Body of pancreas (tissue), 4 donors: ENCODE measurements at regions of chr10 and their contacts with region 1.

Region 1: DNA sequence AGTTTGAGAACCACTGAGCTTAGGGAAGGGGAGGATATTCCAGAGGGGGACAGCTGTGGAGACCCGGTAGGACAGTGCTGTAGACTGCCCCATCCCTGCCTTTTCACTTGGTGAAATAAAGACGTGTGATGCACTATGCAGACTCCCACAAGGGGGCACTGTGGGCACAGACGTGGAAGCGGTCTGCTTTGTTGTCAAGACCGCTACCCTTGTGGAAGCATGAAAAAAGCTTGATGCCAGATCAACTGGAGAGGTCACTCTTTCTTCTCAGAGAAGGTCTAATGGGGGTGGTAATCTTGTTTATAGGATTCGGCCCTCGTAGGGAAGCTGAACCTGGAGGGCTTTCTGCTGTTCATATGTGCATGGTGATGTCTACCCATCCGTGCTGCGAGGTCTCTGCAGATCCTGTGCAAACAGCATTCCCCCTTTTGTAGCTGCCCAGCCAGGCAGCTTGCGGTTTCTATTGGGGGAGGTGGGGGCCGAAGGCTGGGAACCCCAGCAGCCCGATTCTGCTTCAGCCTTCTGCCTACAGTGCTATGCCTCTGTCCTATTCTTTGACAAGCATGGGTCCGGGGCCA is 13.7 kb downstream of the RPS24 start:
- DNase-seq: peak; percentile 84 to 91 (median 88)
- ATAC-seq: peak; percentile 90
- H3K4me3 ChIP-seq: no peak overlapping the region
- H3K27ac ChIP-seq: no peak overlapping the region
- H3K4me1 ChIP-seq: no peaks in the 10 kb centered on the region
- H3K27me3 ChIP-seq: no peaks in the 10 kb centered on the region
- CTCF ChIP-seq: peak; percentile 74 to 93 (median 86)
- POLR2A ChIP-seq: no peak

Region 2: GRCh38 chr10:78657163-78657861 is 609.9 kb after region 1 on chr10:
- intact Hi-C with region 1: loop called (anchors 10 kb)
- DNase-seq: peak; percentile 82 to 88 (median 84)
- ATAC-seq: peak; percentile 89
- H3K4me3 ChIP-seq: no peak overlapping the region
- H3K27ac ChIP-seq: no peak overlapping the region
- H3K4me1 ChIP-seq: no peaks in the 10 kb centered on the region
- H3K27me3 ChIP-seq: no peaks in the 10 kb centered on the region
- CTCF ChIP-seq: peak; percentile 49 to 76 (median 68)
- POLR2A ChIP-seq: no peak

Region 3: DNA sequence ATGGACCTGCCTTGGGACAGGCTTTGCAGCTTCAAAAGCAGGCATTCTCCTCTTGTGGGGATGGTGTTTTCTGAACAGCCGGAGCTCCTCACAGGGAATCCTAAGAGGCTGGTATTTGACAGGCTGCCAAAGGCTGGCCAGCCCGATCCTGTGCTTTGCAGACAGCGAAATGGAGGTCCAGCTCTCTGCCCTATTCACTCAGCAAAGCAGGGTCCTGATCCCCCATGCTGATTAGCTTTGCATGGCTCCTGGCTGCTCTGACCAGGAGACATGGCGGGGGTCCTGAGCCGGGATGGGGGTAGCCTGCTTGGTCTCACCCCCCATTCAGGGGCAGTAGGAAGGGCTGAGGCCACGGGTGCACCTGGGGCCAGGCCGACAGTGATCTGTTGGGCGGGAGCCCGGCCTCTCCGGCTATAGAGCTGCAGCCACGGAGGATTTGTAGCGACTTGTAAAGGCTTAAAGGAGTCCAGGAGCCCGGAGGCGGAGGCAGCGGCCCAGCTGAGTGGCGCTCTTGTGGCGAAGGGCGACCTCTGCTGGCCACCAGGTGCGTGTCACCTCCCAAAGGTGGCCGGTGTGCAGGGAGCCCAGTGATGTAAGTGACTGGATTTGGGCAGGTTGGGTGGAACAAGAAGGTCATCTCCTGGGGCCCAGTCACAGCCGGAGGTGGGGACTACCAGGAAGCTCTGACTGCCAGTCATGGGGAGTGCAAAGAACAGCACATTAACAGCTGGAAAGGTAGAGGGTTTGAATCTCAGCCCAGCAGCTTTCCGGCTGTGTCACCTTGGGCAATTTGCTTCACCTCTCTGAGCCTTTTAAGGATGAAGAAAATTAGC is 1147.9 kb after region 1 on chr10:
- intact Hi-C with region 1: loop called (anchors 5 kb)
- DNase-seq: peak; percentile 90 to 94 (median 90)
- ATAC-seq: peak; percentile 90
- H3K4me3 ChIP-seq: no peak overlapping the region
- H3K27ac ChIP-seq: peak overlapping the region; percentile 3 to 57 (median 33)
- H3K4me1 ChIP-seq: peaks cover 28% of the 10 kb centered on the region
- H3K27me3 ChIP-seq: no peaks in the 10 kb centered on the region
- CTCF ChIP-seq: peak; percentile 92 to 97 (median 96)
- POLR2A ChIP-seq: peak in 2 of 3 donors; percentile 12 to 14